OCI-LY7 (cell line): ENCODE measurements at regions of chr7 and their contacts with region 1.

Region 1: GRCh38 chr7:3897438-3898385 is 596.7 kb downstream of the SDK1 start:
- DNase-seq: peak; percentile 53
- H3K4me3 ChIP-seq: no peak overlapping the region
- H3K27ac ChIP-seq: no peak overlapping the region
- H3K4me1 ChIP-seq: no peaks in the 10 kb centered on the region
- CTCF ChIP-seq: peak; percentile 94

Region 2: DNA sequence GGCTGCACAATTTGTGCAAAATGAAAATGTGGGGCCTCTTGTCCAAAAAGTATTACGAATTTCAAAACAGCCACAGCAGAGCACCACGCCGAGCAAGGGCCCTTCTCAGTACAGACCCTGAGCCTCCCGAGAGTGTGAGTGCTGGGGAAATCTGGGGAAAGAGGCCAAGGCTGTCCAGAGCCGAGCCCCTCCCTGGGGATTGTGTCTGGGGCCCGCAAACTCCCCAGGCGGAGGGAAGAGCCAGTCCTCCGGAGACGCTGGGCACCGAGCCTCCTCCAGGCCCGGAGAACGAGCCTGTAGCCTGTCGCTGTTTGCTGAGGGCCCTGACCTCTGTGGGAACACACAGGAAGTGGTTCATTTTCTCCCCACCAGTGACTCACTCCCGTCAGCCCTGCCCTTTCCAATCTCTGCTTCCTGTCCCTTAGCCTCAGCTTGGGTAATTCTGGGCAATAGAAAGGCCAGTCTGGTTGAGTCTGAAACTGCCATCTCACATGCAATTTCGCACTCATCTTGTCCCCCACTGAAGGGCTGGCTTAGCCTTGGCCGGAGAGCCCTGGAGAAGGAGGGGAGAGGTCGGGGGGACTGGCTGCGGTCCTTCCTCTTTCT is 1034.1 kb before region 1 on chr7:
- CTCF ChIA-PET with region 1: no interaction called
- POLR2A ChIA-PET with region 1: no interaction called
- intact Hi-C with region 1: loop called (anchors 10 kb)
- DNase-seq: peak; percentile 40
- H3K4me3 ChIP-seq: no peak overlapping the region
- H3K27ac ChIP-seq: no peak overlapping the region
- H3K4me1 ChIP-seq: peaks cover 9% of the 10 kb centered on the region
- CTCF ChIP-seq: no peak

Region 3: DNA sequence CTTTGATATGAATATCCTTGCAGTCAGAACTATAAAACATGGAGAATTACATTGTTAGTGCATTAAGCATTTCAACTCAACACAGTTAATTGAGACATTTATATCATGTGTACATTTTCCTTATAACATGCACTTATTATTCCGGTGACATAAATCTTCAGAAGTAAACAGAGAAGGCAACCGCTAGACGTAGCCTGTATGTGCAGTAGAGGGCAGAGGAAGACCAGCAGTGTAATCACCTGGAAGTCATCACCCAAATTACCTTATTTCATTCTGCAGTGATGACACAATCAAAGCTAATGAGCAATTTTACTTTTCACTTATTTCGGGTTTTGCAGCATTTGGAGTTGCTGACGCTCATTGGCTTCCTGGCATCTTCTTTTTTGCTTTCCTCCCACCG is 202.1 kb before region 1 on chr7:
- CTCF ChIA-PET with region 1: no interaction called
- POLR2A ChIA-PET with region 1: no interaction called
- intact Hi-C with region 1: loop called (anchors 5 kb)
- DNase-seq: peak; percentile 1
- H3K4me3 ChIP-seq: no peak overlapping the region
- H3K27ac ChIP-seq: no peak overlapping the region
- H3K4me1 ChIP-seq: no peaks in the 10 kb centered on the region
- CTCF ChIP-seq: peak; percentile 23; the same call in 1 of the 2 replicates